T-cell (primary cell): ENCODE measurements at regions of chr2 and their contacts with region 1.

Region 1: DNA sequence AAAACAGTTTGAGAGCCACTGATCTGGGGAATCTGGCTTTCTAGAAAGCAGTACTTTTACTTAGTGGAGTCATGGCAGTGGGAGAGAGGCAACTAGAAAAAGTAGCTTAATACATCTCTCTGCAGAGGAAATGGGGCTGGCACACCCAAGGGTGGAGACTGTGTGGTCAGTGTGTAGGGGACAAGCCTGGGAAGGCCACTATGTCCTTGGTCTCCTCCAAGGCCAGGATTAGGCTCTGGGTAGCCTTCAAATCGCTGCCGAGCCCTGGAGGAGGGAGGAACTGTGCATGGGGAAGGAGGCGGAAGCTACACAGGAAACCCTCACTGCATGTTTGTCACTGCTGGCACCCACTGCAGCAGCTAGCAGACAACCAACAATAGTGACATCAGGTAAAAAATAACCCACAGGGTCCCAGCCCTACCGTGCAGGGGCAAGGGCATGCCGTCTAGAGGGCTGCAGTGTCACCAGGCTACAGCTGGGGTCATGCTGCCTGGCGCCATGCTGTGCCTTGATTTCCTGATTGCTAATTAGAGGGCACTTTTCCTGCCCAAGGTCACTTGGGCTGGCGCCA is 34.8 kb downstream of the LBH start:
- DNase-seq: peak; percentile 59 to 83 (median 71)
- ATAC-seq: peak; percentile 94 to 96 (median 96)
- H3K4me3 ChIP-seq: peak overlapping the region; percentile 34 to 50
- H3K4me3 Mint-ChIP-seq: peak overlapping the region; percentile 73 to 80 (median 79)
- H3K27ac ChIP-seq: peak overlapping the region; percentile 89
- H3K27ac Mint-ChIP-seq: peak overlapping the region; percentile 99
- H3K4me1 ChIP-seq: peaks cover 45 to 58% of the 10 kb centered on the region in 2 experiments
- H3K4me1 Mint-ChIP-seq: peaks cover 80 to 91% (median 84%) of the 10 kb centered on the region in 3 donors
- H3K27me3 ChIP-seq: no peaks in the 10 kb centered on the region
- H3K27me3 Mint-ChIP-seq: no peaks in the 10 kb centered on the region

Region 2: DNA sequence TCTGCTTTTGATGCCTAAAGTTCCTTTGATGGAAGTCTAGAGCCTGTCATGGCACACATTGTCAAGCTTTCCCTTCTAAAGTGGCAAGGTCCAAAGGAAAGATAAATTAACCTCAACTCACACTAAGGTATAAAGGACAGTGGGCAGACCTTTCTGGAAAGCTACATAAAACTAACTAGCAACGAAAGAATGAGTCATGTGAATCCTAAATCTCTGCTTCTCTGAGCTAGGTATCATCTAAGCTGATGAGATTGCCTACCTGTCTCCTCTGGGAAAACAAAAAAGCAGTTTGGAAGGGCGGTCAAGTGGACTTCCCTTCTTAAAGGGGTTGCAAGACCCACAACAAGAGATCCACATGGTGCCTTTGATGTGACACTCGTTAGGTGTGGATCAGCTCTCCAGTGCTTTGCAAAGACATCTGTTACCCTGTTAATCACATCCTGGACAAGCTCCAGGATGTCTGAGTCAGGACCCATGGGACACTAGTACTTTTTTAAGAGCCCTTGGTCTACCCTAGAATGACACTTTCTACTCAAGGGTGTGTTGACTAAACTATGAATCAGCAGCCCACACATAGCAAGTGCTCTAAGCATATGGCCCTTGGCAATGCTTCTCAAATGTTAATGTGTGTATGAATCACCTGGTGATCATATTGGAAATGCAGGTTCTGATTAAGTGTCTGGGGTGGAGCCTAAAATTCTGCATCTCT is 518.2 kb before region 1 on chr2:
- CTCF ChIA-PET with region 1: no interaction called
- POLR2A ChIA-PET with region 1: no interaction called
- DNase-seq: no peak
- ATAC-seq: no peak
- H3K4me3 ChIP-seq: no peak overlapping the region
- H3K4me3 Mint-ChIP-seq: no peak overlapping the region
- H3K27ac ChIP-seq: no peak overlapping the region
- H3K27ac Mint-ChIP-seq: no peak overlapping the region
- H3K4me1 ChIP-seq: no peaks in the 10 kb centered on the region
- H3K4me1 Mint-ChIP-seq: no peaks in the 10 kb centered on the region
- H3K27me3 ChIP-seq: no peaks in the 10 kb centered on the region
- H3K27me3 Mint-ChIP-seq: peaks cover 5 to 6% of the 10 kb centered on the region in 2 donors

Region 3: DNA sequence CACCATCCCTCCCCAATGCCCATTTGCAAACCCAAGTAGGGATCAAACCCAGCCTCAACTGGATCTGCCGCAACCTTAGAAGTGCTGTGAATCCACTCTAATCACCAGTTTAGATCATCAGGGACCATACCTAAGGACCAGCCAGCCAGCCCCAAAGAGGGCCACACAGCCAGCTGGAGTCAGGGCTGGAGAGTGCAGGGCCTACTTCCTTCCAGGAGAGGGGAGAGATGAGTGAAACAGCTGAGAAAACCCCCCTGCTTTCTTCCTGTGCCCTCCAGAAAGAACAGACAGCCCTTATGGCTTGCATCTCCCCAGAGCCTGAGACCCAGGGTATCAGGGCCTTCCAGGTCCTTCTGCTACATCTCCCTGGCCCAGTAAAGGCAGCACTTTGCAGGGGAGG is 93.5 kb before region 1 on chr2:
- CTCF ChIA-PET with region 1: interaction called in 1 of 2 experiments, 11 read pairs
- POLR2A ChIA-PET with region 1: no interaction called
- DNase-seq: no peak
- ATAC-seq: peak in 1 of 4 experiments; percentile 5
- H3K4me3 ChIP-seq: no peak overlapping the region
- H3K4me3 Mint-ChIP-seq: peak overlapping the region in 1 of 3 donors; percentile 22
- H3K27ac ChIP-seq: no peak overlapping the region
- H3K27ac Mint-ChIP-seq: no peak overlapping the region
- H3K4me1 ChIP-seq: no peaks in the 10 kb centered on the region
- H3K4me1 Mint-ChIP-seq: peaks cover 0 to 25% (median 0%) of the 10 kb centered on the region in 3 donors
- H3K27me3 ChIP-seq: no peaks in the 10 kb centered on the region
- H3K27me3 Mint-ChIP-seq: no peaks in the 10 kb centered on the region

Region 4: GRCh38 chr2:30580391-30580790 is 314.3 kb after region 1 on chr2:
- CTCF ChIA-PET with region 1: no interaction called
- POLR2A ChIA-PET with region 1: no interaction called
- DNase-seq: no peak
- ATAC-seq: no peak
- H3K4me3 ChIP-seq: no peak overlapping the region
- H3K4me3 Mint-ChIP-seq: no peak overlapping the region
- H3K27ac ChIP-seq: no peak overlapping the region
- H3K27ac Mint-ChIP-seq: peak overlapping the region in 1 of 2 donors; percentile 1
- H3K4me1 ChIP-seq: no peaks in the 10 kb centered on the region
- H3K4me1 Mint-ChIP-seq: peaks cover 20 to 31% (median 23%) of the 10 kb centered on the region in 3 donors
- H3K27me3 ChIP-seq: no peaks in the 10 kb centered on the region
- H3K27me3 Mint-ChIP-seq: no peaks in the 10 kb centered on the region